Activated B cell treated with CpG ODN at 0.5 μM for 24 hours (primary cell): ENCODE measurements at regions of chr2 and their contacts with region 1.

Region 1: DNA sequence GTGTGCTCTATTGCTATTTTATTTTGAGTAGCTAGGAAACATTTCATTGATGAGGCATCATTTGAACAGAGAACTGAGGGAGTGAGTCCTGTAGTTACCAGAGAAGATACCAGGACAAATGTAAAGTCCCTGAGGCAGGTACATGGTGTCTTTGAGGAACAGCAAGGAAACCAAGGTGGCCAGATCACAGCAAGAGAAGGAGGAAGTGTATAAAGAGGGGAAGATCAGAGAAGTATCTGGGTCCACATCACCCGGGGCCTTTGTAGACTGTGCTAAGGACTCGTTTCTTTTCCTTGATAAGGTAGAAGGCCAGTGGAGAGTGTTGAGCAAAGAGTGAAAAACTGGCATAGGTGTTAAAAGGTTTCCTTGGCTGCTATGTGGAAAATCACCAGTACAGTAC is 34.8 kb upstream of the PLB1 start:
- DNase-seq: no peak
- ATAC-seq: no peak
- H3K4me3 Mint-ChIP-seq: no peak overlapping the region
- H3K27ac Mint-ChIP-seq: no peak overlapping the region
- H3K4me1 Mint-ChIP-seq: no peaks in the 10 kb centered on the region
- H3K27me3 Mint-ChIP-seq: peaks cover 20% of the 10 kb centered on the region
- CTCF ChIP-seq: no peak

Region 2: DNA sequence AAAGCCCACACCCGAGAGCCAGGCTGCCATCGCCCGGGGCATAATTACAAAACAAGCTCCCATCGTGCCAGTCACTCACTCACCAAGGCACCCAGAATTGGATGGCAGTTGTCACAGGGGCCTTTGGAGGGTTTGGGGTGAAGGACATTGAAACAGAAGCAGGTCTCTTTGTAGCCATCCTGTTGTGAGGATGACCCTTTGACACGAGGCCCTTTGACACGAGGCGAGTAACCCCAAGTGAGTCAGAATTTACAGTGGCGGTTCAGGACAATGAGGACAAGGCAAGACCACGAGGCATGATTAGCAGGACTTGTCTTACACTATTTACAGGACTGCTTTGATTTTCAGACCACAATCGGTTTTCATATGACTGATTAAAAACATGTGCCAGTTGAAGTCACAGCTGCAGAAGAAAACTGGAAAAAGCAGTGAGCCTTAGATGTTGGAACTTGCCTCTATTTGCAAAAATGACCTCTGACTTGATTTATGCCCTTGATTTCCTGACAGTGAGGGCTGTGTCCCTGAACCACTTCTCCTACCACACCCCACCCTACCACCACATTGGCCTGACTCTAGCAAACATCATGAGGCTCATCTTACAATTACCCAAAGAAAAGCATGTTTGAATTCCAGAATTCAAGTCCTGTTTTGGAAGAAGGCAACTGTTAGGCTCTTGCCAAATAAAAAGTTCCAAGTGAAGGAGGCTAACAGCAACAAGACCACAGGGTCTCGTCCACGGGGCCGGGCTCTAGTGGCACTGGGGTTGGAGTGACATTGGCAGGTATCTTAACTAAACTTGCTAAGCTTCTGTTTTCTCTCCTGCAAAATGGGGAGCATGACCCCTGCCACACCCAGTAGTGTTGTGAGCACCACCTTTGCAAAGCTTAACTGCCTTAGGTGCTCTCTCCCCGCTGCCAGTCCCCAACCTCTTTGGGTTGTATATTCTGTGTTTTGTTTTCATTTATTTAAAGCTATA is 132.8 kb before region 1 on chr2:
- CTCF ChIA-PET with region 1: no interaction called
- POLR2A ChIA-PET with region 1: no interaction called
- intact Hi-C with region 1: no loop called
- DNase-seq: no peak
- ATAC-seq: no peak
- H3K4me3 Mint-ChIP-seq: no peak overlapping the region
- H3K27ac Mint-ChIP-seq: no peak overlapping the region
- H3K4me1 Mint-ChIP-seq: peaks cover 4% of the 10 kb centered on the region
- H3K27me3 Mint-ChIP-seq: no peaks in the 10 kb centered on the region
- CTCF ChIP-seq: no peak

Region 3: DNA sequence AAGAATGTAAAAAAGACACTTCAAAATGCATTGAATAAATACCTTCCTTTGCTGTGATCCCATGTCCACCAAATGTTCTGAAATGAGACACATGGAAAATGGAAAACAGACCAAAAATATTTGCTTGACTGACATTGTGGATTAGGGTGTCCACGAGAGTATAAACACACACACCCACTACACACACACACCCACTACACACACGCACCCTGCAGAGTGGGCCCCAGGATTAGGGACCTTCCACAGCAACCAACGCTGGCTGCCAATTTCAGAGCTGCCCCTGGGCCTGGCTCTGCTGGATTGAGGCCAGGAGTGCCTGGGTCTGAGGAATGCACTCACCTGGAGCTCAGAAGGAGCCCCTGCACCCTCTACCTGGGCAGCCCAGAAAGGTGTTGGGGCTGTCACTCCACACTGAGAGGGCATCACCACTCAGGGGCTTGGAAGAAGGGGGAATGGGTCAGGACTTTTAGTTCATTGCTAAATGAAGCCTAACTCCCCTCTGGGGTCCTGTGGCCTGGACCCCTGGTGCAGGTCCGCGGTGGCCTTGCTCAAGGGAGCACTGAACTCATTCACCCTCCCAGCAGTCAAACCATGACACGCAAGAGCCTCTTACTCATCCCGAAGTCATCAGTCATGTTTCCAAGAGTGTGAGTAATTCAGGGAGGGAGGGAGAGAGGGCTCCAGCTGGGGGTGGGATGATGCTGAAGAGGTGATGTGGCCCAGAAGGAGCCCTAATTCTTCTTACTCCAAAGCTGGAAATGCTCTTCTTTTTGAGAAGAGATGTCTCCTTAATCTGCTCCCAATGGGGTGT is 15.4 kb before region 1 on chr2:
- CTCF ChIA-PET with region 1: no interaction called
- POLR2A ChIA-PET with region 1: interaction called, 15 read pairs
- intact Hi-C with region 1: no loop called
- DNase-seq: no peak
- ATAC-seq: no peak
- H3K4me3 Mint-ChIP-seq: no peak overlapping the region
- H3K27ac Mint-ChIP-seq: no peak overlapping the region
- H3K4me1 Mint-ChIP-seq: no peaks in the 10 kb centered on the region
- H3K27me3 Mint-ChIP-seq: peaks cover 8% of the 10 kb centered on the region
- CTCF ChIP-seq: no peak